Stomach (tissue), 19 donors: ENCODE measurements at regions of chr4 and their contacts with region 1.

Region 1: DNA sequence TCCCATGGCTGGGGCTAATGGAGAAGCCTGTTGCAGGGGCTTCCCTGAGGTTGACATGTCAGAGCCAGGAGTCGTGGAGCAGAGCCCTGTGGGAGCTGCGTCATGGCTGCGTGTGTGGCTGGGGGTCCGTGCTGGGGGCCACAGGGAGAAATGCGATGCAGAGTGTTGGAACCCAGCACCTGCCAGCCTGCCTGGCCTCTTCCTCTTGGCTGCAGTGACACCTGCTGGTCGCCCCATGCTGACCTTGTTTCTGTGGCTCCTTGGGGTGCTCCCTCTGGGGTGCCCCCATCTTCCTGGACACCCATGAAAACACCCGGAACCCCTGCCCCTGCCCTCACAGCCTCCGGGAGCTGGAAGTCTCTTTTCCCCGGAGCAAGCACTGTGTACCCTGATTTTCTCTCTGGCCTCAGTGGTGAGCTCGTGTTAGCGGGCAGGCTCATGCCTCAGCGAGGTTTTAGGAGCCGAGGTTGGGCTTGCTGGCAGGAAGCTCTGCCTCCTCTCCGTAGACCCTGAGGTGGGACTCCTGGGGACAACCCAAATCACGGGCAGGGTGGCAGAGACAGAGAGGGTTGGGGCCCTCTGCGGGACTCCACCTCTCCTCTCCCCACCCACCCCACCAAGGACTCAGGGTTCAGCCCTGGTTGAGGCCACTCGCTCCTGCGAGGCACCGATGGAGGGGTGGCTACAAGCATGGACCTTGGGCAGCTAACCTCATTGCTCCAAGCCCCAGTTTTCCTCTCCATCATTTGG is 103.7 kb downstream of the SORCS2 start:
- DNase-seq: peak in 1 of 2 donors; percentile 60
- H3K4me3 ChIP-seq: no peak overlapping the region
- H3K27ac ChIP-seq: no peak overlapping the region
- H3K4me1 ChIP-seq: peaks cover 0 to 9% (median 2%) of the 10 kb centered on the region in 4 donors
- H3K27me3 ChIP-seq: peaks cover 0 to 48% (median 10%) of the 10 kb centered on the region in 3 donors
- CTCF ChIP-seq: peak in 4 of 7 experiments; percentile 17 to 36 (median 26)
- EP300 ChIP-seq: no peak
- POLR2A ChIP-seq: no peak

Region 2: GRCh38 chr4:7192252-7193029 is 103.6 kb before region 1 on chr4 and contains the start of gene SORCS2:
- intact Hi-C with region 1: loop called (anchors 10 kb)
- DNase-seq: peak; percentile 67 to 90
- H3K4me3 ChIP-seq: peak within 1 kb of the TSS; percentile 39 to 44 (median 41)
- H3K27ac ChIP-seq: no peak within 1 kb of the TSS
- H3K4me1 ChIP-seq: peaks cover 12 to 33% (median 19%) of the 10 kb centered on the region in 4 donors
- H3K27me3 ChIP-seq: peaks cover 0 to 97% (median 50%) of the 10 kb centered on the region in 3 donors
- CTCF ChIP-seq: peak in 5 of 7 experiments; percentile 0 to 75 (median 41)
- EP300 ChIP-seq: no peak
- POLR2A ChIP-seq: no peak
- total RNA-seq, gene SORCS2: under 0.01 to 13.0 (median 4.2) TPM in 4 of 5 donors, not detected in the other

Region 3: DNA sequence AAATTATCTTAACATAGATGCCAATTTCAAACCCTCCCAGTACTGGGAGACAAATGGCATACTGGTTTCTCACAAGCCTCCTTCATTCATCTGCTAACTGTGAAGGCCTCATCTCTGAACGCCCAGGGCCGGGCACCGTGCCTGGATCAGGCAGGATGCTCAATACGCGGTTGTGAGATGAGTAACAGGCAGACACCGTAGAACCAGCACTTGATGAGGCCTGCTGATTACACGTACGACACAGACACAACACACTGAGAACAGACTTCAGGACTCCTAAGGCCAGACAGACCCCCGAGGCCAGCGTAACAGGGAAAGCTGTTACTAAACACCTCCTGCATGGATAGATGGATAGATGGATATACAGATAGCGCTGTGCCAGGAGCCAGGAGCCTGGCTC is 488.9 kb after region 1 on chr4:
- intact Hi-C with region 1: no loop called
- DNase-seq: no peak
- H3K4me3 ChIP-seq: no peak overlapping the region
- H3K27ac ChIP-seq: no peak overlapping the region
- H3K4me1 ChIP-seq: peaks cover 7 to 24% (median 13%) of the 10 kb centered on the region in 4 donors
- H3K27me3 ChIP-seq: no peaks in the 10 kb centered on the region
- CTCF ChIP-seq: no peak
- EP300 ChIP-seq: no peak
- POLR2A ChIP-seq: no peak